ENCODE measurements at regions of chr14 and their contacts with region 1.

Region 1: GRCh38 chr14:21313512-21313911 is 33.6 kb downstream of the RPGRIP1 start:
- DNase-seq: no peak
- H3K4me3 ChIP-seq: no peak overlapping the region
- H3K27ac ChIP-seq: no peak overlapping the region
- H3K4me1 ChIP-seq: peaks cover 1% of the 10 kb centered on the region
- H3K27me3 ChIP-seq: no peaks in the 10 kb centered on the region
- CTCF ChIP-seq: no peak
- POLR2A ChIP-seq: no peak

Region 2: GRCh38 chr14:21476925-21477681 is 163.6 kb after region 1 on chr14 and contains the starts of genes RAB2B and TOX4:
- intact Hi-C with region 1: loop called (anchors 5 kb)
- DNase-seq: peak; percentile 97 to 99
- H3K4me3 ChIP-seq: peak within 1 kb of the TSS; percentile 76 to 92
- H3K27ac ChIP-seq: peak within 1 kb of the TSS; percentile 81
- H3K4me1 ChIP-seq: peaks cover 31% of the 10 kb centered on the region
- H3K27me3 ChIP-seq: no peaks in the 10 kb centered on the region
- CTCF ChIP-seq: peak; percentile 71 to 98 (median 90)
- POLR2A ChIP-seq: peak in 1 of 2 donors; percentile 54
- total RNA-seq, gene RAB2B: 19.4 TPM
- total RNA-seq, gene TOX4: 23.3 TPM